ENCODE measurements at regions of chr11 and their contacts with region 1.

Region 1: DNA sequence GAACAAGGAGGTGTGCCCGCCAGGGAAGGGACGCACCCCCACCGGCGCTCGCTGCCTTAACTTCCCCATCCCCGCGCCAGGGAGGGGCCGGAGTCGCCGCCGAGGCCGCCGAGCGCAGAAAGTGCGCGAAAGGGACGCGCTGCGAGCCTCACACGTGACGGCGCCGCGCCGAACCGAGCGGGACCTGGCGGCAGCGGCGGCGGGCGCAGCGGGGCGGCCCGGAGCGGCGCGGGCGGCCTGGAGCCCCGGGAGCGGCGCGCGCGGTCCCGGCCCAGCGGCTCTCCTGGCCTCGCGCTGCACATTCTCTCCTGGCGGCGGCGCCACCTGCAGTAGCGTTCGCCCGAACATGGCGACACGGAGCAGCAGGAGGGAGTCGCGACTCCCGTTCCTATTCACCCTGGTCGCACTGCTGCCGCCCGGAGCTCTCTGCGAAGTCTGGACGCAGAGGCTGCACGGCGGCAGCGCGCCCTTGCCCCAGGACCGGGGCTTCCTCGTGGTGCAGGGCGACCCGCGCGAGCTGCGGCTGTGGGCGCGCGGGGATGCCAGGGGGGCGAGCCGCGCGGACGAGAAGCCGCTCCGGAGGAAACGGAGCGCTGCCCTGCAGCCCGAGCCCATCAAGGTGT is at the start of gene SORL1:
- DNase-seq: peak; percentile 88 to 94
- H3K4me3 ChIP-seq: peak within 1 kb of the TSS; percentile 47
- H3K4me3 Mint-ChIP-seq: peak within 1 kb of the TSS; percentile 90
- H3K27ac Mint-ChIP-seq: peak within 1 kb of the TSS; percentile 58
- H3K4me1 ChIP-seq: peaks cover 30% of the 10 kb centered on the region
- H3K4me1 Mint-ChIP-seq: peaks cover 28% of the 10 kb centered on the region
- H3K27me3 ChIP-seq: no peaks in the 10 kb centered on the region
- H3K27me3 Mint-ChIP-seq: no peaks in the 10 kb centered on the region
- CTCF ChIP-seq: peak; percentile 80 to 92
- total RNA-seq, gene SORL1: 26.3 and 34.0 TPM in 2 replicates

Region 2: GRCh38 chr11:121318848-121319834 is 133.0 kb before region 1 on chr11:
- CTCF ChIA-PET with region 1: interaction called, 4 read pairs
- POLR2A ChIA-PET with region 1: no interaction called
- intact Hi-C with region 1: loop called (anchors 5 kb)
- DNase-seq: peak in 1 of 2 experiments; percentile 61
- H3K4me3 ChIP-seq: no peak overlapping the region
- H3K4me3 Mint-ChIP-seq: no peak overlapping the region
- H3K27ac Mint-ChIP-seq: no peak overlapping the region
- H3K4me1 ChIP-seq: peaks cover 4% of the 10 kb centered on the region; the same call in 1 of the 2 replicates
- H3K4me1 Mint-ChIP-seq: peaks cover 18% of the 10 kb centered on the region
- H3K27me3 ChIP-seq: no peaks in the 10 kb centered on the region
- H3K27me3 Mint-ChIP-seq: peaks cover 12% of the 10 kb centered on the region
- CTCF ChIP-seq: peak; percentile 88 to 95

Region 3: GRCh38 chr11:121466063-121466794 is 14.1 kb after region 1 on chr11:
- CTCF ChIA-PET with region 1: interaction called, 7 read pairs
- POLR2A ChIA-PET with region 1: interaction called, 5 read pairs
- intact Hi-C with region 1: loop called (anchors 1 kb)
- DNase-seq: peak; percentile 95 to 98
- H3K4me3 ChIP-seq: no peak overlapping the region
- H3K4me3 Mint-ChIP-seq: peak overlapping the region; percentile 33
- H3K27ac Mint-ChIP-seq: peak overlapping the region; percentile 91
- H3K4me1 ChIP-seq: peaks cover 48% of the 10 kb centered on the region
- H3K4me1 Mint-ChIP-seq: peaks cover 35% of the 10 kb centered on the region
- H3K27me3 ChIP-seq: no peaks in the 10 kb centered on the region
- H3K27me3 Mint-ChIP-seq: no peaks in the 10 kb centered on the region
- CTCF ChIP-seq: no peak

Region 4: DNA sequence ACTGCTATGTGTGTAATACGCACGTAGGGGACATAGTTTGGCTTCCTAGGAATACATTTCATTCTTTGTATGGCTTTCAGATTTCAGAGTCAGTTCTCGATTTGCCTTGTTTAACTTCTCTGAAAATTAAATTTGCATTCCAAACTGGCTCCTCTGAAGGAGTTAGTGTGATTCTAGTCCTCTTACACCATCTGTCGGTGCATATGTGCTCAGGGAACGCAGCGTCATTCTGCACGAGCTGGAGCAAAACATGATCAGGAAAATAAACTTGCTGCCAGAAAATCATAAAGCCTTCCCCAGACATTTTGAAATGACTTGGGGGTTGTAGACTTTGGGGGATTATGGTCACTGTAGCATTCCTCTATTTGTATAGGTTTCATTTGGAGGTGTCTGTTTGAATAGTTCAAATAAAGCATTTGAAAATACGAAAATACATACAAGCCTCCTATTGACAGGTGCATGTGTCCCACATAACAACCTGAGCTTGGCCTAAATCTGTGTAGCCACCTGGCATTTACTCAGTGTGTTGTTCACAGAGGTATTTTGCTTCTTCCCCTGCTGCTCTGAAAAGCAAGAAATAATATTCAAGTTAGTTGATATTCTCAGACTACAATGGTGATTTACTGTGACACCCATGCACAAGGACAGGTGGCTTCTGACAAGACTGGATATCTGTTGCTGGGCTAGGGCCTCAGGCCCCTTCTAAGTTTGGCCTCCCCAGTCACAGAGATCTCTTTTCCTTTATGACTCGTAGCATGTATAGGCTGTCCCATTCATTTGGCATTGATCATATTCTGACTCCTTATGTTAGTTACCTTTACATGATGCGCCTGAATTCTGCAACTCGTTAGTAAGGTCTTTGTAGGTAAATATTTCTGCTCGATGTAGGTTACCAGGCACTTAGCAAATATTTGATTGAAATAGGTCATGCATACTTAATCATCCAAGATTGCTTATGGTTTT is 82.3 kb after region 1 on chr11:
- CTCF ChIA-PET with region 1: no interaction called
- POLR2A ChIA-PET with region 1: interaction called, 3 read pairs
- intact Hi-C with region 1: loop called (anchors 5 kb)
- DNase-seq: no peak
- H3K4me3 ChIP-seq: no peak overlapping the region
- H3K4me3 Mint-ChIP-seq: no peak overlapping the region
- H3K27ac Mint-ChIP-seq: no peak overlapping the region
- H3K4me1 ChIP-seq: no peaks in the 10 kb centered on the region
- H3K4me1 Mint-ChIP-seq: peaks cover 5% of the 10 kb centered on the region
- H3K27me3 ChIP-seq: no peaks in the 10 kb centered on the region
- H3K27me3 Mint-ChIP-seq: no peaks in the 10 kb centered on the region
- CTCF ChIP-seq: no peak

Region 5: DNA sequence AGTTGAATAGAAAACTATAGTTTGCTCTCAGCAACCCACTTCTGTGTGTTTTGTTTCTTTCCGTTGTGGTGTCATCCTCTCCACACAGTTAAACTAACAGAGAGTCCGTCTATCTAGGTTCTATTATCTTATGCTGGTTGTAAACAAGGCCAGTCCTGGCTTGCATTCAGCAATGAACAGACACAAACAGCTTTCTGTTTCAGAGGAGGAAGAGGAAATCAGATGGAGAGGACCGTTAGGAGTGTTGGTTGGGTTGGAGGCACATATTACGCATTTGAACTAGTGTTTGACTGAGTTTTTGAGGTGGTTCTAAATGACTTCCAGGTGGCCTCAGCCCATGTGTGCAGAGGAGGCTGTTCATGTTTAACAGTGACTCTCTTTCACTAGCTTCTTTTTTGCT is 130.2 kb after region 1 on chr11:
- CTCF ChIA-PET with region 1: no interaction called
- POLR2A ChIA-PET with region 1: no interaction called
- intact Hi-C with region 1: no loop called
- DNase-seq: no peak
- H3K4me3 ChIP-seq: no peak overlapping the region
- H3K4me3 Mint-ChIP-seq: no peak overlapping the region
- H3K27ac Mint-ChIP-seq: no peak overlapping the region
- H3K4me1 ChIP-seq: peaks cover 14% of the 10 kb centered on the region
- H3K4me1 Mint-ChIP-seq: no peaks in the 10 kb centered on the region
- H3K27me3 ChIP-seq: no peaks in the 10 kb centered on the region
- H3K27me3 Mint-ChIP-seq: no peaks in the 10 kb centered on the region
- CTCF ChIP-seq: no peak